ENCODE measurements at regions of chr16 and their contacts with region 1.

Region 1: DNA sequence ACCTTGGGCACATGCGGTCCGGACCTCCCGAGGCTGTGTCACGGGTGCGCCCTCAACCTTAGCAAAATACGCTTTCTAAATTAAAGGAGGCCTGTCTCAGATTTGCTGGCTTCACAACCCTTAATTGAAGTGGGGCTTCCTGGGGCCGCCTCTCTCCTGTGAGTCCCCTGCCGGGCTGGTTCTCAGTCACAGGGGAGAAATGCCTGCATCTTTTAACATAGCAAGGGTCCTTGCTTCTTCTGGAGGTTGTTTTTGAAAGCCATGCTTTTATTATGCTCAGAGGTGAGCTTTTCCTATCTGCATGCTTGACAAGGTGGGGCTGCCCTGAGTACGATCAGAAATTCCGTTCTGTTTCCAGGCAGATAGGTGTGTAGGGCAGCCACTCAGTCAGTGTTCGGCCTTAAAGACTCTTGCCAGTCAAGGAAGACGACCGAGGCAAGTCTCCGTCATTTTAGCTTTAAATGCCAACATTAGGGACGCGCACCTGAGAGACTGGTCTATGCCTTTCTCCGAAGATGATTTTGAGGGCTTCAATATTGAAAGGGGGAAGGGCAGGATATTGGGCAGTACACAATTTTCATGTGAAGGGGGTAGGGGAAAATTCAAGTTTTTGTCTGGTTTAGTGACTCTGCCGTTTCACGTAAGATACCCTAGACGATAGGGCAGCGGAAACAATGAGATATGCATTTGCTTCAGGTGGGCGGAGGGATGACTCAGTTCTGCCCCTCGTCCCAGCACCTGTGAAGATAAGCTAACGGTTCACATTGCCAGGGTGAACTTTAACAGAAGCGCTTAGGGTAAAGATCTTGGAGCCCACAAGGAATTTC is 5.5 kb upstream of the SLC7A5 start:
- DNase-seq: no peak
- H3K4me3 ChIP-seq: no peak overlapping the region
- H3K27ac ChIP-seq: no peak overlapping the region
- H3K4me1 ChIP-seq: no peaks in the 10 kb centered on the region
- H3K27me3 ChIP-seq: no peaks in the 10 kb centered on the region
- CTCF ChIP-seq: no peak
- POLR2A ChIP-seq: no peak

Region 2: GRCh38 chr16:87780385-87780989 is 94.4 kb before region 1 on chr16:
- intact Hi-C with region 1: loop called (anchors 1 kb)
- DNase-seq: no peak
- H3K4me3 ChIP-seq: no peak overlapping the region
- H3K27ac ChIP-seq: no peak overlapping the region
- H3K4me1 ChIP-seq: no peaks in the 10 kb centered on the region
- H3K27me3 ChIP-seq: no peaks in the 10 kb centered on the region
- CTCF ChIP-seq: no peak
- POLR2A ChIP-seq: no peak

Region 3: DNA sequence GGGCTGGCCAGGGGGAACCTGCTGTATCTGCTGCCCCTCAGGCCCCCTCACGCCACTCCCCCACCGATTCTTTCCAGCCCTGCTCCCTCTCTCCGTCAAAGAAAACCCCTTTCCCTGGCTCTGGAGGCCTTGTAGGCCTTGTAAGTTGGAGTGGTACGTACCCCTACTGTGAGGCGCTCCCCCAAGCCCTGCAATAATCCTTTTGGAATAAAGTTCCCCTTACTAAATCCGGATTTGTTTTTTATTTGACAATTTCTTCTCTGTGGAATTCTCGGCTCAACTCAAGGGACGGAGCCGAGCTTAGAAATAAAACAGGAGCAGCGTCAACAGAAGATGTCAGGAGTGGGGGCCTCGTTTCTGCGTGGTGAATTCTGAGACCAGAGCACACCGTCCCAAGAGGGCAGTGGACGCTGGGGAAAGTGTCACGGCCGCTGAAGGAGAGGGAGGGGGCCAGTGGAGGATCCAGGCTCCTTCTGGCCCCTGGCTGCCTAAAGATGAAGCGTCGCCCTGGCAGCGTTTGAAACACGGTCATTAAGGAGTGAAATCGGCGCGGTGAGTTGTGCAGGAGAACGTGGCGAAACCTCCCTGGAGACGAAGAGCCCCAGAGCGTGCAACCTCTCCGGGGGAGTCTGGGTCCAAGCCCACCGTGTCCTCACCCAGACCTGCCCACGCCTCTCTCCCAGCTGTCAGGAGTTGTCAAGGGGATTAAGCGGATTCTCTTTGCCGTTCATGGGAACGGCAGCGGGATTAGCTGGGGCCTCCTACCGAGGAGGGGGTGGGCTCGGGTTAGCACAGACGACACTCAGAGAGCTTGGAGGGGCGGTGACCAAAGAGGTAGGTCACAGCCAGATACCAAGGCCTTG is 52.5 kb before region 1 on chr16:
- intact Hi-C with region 1: no loop called
- DNase-seq: no peak
- H3K4me3 ChIP-seq: no peak overlapping the region
- H3K27ac ChIP-seq: no peak overlapping the region
- H3K4me1 ChIP-seq: no peaks in the 10 kb centered on the region
- H3K27me3 ChIP-seq: no peaks in the 10 kb centered on the region
- CTCF ChIP-seq: no peak
- POLR2A ChIP-seq: no peak

Measured in prostate gland (tissue), 2 donors.